ENCODE measurements at regions of chr7 and their contacts with region 1.

Region 1: DNA sequence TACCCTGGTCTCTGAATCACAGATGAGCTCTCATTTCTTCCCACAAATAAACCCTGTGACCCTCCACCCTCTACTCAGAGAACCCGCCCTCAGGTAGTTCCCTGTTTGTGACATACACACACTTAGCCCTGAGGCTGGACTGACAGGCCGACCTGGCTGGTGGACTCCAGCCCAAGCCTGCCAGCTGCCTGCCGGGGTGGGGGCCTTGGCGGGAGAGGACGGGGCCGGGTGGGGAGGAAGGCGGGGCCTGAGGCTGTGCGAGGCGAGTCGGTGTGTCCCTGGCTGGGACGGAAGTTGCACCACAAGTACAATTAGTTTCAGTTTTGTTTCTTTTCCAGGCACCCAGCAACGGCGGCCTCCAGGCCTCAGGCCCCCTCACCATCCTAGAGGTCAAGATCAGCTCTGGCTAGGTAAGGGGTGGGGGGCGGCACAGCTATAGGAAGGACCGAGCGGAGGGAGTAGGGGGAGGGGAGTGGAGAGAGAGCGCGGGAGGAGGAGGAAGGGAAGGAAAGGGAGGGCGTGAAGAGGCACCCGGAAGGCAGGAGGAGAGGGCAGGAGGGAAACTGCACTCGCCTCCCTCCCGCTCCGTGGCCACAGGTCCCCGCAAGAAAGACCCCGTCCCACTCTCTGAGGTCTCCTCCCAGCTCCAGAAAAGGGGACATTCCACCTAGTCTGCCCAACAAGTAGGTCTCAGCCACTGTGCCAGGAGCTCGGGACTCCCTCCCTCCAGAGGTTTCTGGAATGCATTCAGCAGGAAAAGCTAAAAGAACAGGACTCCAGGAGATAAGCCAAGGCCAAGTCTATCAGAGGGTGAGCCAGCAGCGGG is at the start of gene TRIM56:
- DNase-seq: peak; percentile 95
- ATAC-seq: peak; percentile 88
- H3K4me3 ChIP-seq: peak within 1 kb of the TSS; percentile 84
- H3K27ac ChIP-seq: peak within 1 kb of the TSS; percentile 95
- H3K4me1 ChIP-seq: peaks cover 23% of the 10 kb centered on the region
- H3K27me3 ChIP-seq: no peaks in the 10 kb centered on the region
- CTCF ChIP-seq: no peak
- total RNA-seq, gene TRIM56: 10.6 and 14.8 TPM in 2 replicates

Region 2: DNA sequence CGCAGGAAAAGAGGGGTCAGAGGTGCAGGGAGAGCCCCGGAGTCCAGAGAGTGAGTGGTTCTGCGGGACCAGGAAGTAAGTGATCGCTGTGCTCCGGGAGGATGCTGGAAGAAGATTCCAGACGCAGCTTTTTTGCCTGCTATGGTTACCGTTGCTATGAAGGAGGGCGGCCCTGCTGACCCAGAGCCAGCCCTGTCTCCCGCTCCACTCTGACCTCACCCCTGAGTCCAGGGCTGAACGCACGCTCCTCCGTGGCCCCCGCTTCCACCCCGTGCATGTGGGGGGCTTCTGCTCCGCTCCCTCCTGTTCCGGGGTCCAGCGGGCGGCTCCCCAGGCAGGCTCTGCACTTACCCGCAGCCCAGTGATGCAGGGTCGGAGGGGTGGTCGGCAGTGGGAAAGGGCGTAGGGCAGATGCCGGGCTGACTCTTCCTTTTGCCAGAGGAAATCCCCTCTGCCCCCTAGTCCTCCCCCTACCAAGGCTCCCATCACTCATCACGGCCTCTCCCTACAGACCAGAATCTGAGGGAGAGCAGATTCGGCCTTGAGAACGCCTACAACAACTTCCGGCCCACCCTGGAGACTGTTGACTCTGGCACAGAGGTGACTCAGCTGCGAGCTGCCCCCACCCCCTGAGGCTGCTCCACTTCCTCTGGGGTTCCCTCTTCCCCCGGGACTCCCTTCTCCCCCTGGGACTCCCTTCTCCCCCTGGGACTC is 68.2 kb before region 1 on chr7:
- CTCF ChIA-PET with region 1: no interaction called
- POLR2A ChIA-PET with region 1: interaction called, 19 read pairs
- intact Hi-C with region 1: no loop called
- DNase-seq: peak; percentile 72
- ATAC-seq: peak; percentile 95
- H3K4me3 ChIP-seq: peak overlapping the region; percentile 69
- H3K27ac ChIP-seq: peak overlapping the region; percentile 41; the same call in 1 of the 2 replicates
- H3K4me1 ChIP-seq: peaks cover 7% of the 10 kb centered on the region
- H3K27me3 ChIP-seq: no peaks in the 10 kb centered on the region
- CTCF ChIP-seq: no peak

Region 3: DNA sequence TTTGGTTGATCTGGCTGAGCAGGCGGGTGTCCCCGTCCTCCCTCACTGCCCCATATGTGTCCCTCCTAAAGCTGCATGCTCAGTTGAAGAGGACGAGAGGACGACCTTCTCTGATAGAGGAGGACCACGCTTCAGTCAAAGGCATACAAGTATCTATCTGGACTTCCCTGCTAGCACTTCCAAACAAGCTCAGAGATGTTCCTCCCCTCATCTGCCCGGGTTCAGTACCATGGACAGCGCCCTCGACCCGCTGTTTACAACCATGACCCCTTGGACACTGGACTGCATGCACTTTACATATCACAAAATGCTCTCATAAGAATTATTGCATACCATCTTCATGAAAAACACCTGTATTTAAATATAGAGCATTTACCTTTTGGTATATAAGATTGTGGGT is 27.0 kb before region 1 on chr7:
- CTCF ChIA-PET with region 1: no interaction called
- POLR2A ChIA-PET with region 1: no interaction called
- intact Hi-C with region 1: no loop called
- DNase-seq: peak; percentile 46
- ATAC-seq: no peak
- H3K4me3 ChIP-seq: no peak overlapping the region
- H3K27ac ChIP-seq: no peak overlapping the region
- H3K4me1 ChIP-seq: no peaks in the 10 kb centered on the region
- H3K27me3 ChIP-seq: peaks cover 42% of the 10 kb centered on the region
- CTCF ChIP-seq: no peak

Region 4: GRCh38 chr7:101363734-101364374 is 278.5 kb after region 1 on chr7:
- CTCF ChIA-PET with region 1: no interaction called
- POLR2A ChIA-PET with region 1: no interaction called
- intact Hi-C with region 1: no loop called
- DNase-seq: peak; percentile 65
- ATAC-seq: peak; percentile 95
- H3K4me3 ChIP-seq: peak overlapping the region; percentile 69
- H3K27ac ChIP-seq: no peak overlapping the region
- H3K4me1 ChIP-seq: no peaks in the 10 kb centered on the region
- H3K27me3 ChIP-seq: no peaks in the 10 kb centered on the region
- CTCF ChIP-seq: peak; percentile 81